ENCODE measurements at regions of chr4 and their contacts with region 1.

Region 1: DNA sequence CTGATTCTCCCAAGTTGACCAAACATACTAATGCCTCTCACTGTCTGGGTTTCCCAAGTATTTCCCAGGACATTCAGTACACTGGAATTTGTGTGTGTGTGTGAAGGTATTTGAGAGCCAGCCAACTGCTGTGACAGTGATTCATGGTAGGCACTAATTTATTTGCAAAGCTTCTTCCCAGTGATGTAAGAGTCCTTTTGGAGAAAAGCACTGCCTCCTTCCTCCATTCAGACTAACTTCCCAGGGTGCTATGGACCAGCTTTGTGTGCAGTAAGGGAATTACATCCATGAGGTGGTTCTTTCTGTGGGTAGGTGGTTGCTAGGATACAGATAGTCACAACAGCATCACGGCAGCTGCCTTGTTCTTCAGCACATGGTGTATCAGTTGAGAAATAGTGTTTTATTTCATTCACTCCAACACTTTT is 8.7 kb downstream of the EGF start:
- DNase-seq: peak in 1 of 2 experiments; percentile 82
- H3K4me3 ChIP-seq: no peak overlapping the region
- H3K27ac ChIP-seq: no peak overlapping the region
- H3K4me1 ChIP-seq: no peaks in the 10 kb centered on the region
- H3K27me3 ChIP-seq: no peaks in the 10 kb centered on the region
- CTCF ChIP-seq: no peak

Region 2: GRCh38 chr4:109826719-109827118 is 94.7 kb before region 1 on chr4:
- CTCF ChIA-PET with region 1: no interaction called
- POLR2A ChIA-PET with region 1: no interaction called
- intact Hi-C with region 1: loop called (anchors 5 kb)
- DNase-seq: no peak
- H3K4me3 ChIP-seq: no peak overlapping the region
- H3K27ac ChIP-seq: no peak overlapping the region
- H3K4me1 ChIP-seq: no peaks in the 10 kb centered on the region
- H3K27me3 ChIP-seq: no peaks in the 10 kb centered on the region
- CTCF ChIP-seq: peak; percentile 66